ENCODE measurements at regions of chr19 and their contacts with region 1.

Region 1: DNA sequence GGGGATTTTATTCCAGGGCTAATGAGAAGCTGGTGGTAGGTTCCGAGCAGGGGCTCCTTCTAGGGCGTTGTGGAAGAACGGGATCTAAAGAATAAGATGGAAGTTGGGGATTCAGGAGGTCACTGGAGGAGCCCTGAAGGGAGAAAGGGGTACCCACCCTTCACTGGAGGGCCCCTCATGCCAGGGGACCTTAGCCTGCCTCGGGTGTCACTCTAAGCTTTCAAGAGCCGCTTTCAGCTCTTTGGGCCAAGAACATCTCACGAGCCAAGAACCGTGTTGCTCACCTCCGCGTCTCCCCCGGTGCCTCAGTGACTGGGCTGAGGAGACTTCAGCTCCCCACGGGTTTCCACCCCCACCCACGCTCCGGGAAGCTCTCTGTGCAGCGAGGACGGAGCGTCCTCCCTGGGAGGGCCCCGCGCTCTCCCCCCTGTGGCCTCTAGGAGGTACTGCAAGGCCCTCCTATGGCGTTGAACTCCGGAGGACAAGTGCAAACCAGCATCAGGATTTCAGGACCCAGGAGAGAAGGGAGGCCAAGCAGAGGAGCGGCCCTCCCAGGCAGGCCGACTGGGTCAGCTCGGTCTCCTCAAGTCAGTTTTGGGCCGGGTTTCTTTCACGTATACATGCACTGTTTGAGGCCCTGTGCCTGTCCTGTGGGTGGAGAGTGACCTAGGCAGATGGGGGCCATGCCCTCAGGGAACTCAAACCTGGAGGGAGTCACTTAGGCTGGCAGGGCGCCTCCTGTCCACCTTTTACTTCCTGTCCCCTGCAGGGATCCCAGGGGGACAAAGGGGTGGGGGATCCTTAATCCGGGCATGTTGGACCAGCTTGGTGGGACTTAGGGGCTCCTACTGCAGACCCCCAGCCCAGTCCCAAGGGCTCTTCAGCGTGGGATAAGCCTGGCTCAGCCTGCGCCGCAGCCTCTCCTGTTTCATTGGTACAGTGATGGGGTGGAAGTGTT is 5.1 kb upstream of the KRTDAP start:
- DNase-seq: no peak
- H3K4me3 ChIP-seq: no peak overlapping the region
- H3K27me3 ChIP-seq: peaks cover 2% of the 10 kb centered on the region
- CTCF ChIP-seq: peak; percentile 99

Region 2: GRCh38 chr19:35352448-35353304 is 142.7 kb before region 1 on chr19:
- CTCF ChIA-PET with region 1: interaction called, 36 read pairs
- POLR2A ChIA-PET with region 1: no interaction called
- DNase-seq: peak; percentile 3
- H3K4me3 ChIP-seq: no peak overlapping the region
- H3K27me3 ChIP-seq: peaks cover 2% of the 10 kb centered on the region; the same call in 1 of the 2 replicates
- CTCF ChIP-seq: peak; percentile 80

Region 3: GRCh38 chr19:35449053-35449687 is 46.2 kb before region 1 on chr19:
- CTCF ChIA-PET with region 1: interaction called, 5 read pairs
- POLR2A ChIA-PET with region 1: interaction called, 20 read pairs
- DNase-seq: no peak
- H3K4me3 ChIP-seq: no peak overlapping the region
- H3K27me3 ChIP-seq: 0 out of 2 replicates have a peak, but pooled peaks cover 2% of the 10 kb centered on the region
- CTCF ChIP-seq: no peak

Region 4: DNA sequence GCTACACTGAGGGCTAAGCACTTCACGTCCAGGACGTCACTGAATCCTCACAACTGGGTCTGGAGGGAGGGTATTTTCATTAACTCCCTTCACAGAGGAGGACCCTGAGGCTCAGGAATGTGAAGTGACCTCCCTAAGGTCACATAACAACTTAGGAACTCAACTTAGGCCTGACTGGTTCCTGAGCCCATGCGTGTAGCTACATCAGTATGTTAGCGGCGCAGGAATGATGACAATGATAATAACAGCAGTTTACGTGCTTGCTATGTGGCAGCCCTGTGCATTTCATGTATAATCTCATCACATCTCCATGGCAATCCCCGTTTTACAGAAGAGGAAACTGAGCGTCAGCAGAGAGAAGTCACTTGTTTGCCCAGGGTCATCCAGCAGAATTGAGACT is 23.4 kb before region 1 on chr19:
- CTCF ChIA-PET with region 1: interaction called, 11 read pairs
- POLR2A ChIA-PET with region 1: no interaction called
- DNase-seq: no peak
- H3K4me3 ChIP-seq: no peak overlapping the region
- H3K27me3 ChIP-seq: no peaks in the 10 kb centered on the region; the same call in 1 of the 2 replicates
- CTCF ChIP-seq: no peak

Region 5: DNA sequence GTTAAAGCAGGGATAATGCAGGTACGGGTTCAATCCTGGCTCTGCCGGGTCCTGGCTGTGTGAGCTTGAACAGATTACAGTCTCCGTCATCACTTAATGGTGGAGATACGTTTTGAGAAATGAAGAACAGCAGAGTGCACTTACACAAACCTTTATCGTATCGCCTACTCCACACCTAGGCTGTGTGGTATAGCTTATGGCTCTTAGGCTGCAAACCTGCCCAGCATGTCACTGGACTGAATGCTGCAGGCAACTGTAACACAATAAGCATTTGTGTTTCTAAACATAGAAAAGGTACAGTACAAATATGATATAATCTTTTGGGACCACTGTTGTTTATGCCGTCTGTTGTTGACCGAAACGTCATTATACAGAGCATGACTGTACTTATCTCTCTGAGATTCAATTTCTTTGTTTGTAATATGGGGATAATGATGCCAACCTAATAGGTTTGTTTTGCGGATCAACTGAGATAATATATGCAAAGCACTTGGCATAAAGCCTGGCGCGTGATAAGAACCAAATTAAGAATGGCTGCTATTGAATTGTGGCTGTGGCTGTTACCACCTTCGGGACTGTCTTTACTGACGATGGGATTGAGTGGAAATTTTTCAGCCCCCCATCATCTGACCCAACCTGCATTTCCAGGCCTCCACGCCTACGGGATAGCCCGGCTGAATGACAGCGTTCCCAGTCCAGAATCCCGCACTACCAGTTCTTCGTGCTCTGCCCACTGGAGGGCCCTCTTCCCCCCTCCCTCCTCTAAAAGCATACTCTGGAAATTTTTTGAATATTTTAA is 16.4 kb before region 1 on chr19:
- CTCF ChIA-PET with region 1: interaction called, 11 read pairs
- POLR2A ChIA-PET with region 1: no interaction called
- DNase-seq: no peak
- H3K4me3 ChIP-seq: no peak overlapping the region
- H3K27me3 ChIP-seq: no peaks in the 10 kb centered on the region
- CTCF ChIP-seq: no peak

Region 6: GRCh38 chr19:35509861-35510625 is 14.7 kb after region 1 on chr19:
- CTCF ChIA-PET with region 1: interaction called, 48 read pairs
- POLR2A ChIA-PET with region 1: no interaction called
- DNase-seq: no peak
- H3K4me3 ChIP-seq: peak overlapping the region; percentile 30
- H3K27me3 ChIP-seq: peaks cover 23% of the 10 kb centered on the region
- CTCF ChIP-seq: peak; percentile 96

Measured in BJ (cell line).